PC-9 (cell line): ENCODE measurements at regions of chr17 and their contacts with region 1.

Region 1: DNA sequence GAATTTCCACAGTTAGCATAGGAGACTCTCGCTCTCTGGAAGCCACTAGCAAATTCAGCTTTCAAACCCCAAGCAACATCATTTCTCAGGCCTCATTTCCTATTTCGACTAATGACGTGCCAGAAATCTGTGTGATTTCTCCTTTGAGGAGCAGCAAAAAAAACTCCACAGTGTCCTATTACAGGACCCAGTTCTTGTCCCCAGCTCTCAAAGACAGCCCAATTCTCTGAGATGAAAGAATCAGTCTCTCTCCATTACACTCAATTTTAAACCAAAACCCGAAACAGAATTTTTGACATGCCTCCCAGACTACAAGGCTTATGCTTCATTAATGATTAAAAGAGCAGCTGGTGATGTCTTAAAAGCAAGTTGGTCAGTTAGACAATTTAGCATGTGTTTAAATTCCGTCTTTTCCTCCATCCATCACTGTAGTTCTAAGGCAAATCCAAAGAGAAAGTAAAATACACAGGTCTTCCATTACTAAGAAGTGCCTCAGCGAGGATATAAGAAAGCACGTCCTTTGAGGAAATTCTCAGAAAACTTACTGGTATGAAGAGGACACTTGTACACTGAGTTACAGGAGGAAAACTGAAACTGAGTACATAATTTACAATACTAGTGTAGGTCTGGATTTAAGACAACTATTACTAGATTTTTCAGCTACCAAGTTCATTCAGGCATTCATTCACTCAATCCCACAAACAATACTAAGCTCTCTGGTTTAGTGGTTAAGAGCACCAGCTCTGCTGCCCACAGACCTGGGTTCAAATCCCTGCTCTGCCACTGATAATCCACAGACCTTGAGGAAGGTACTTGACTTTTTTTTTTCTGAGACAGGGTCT is 12.5 kb downstream of the TOM1L2 start:
- DNase-seq: no peak
- H3K4me3 ChIP-seq: no peak overlapping the region
- H3K27ac ChIP-seq: peak overlapping the region; percentile 90
- H3K4me1 ChIP-seq: peaks cover 54% of the 10 kb centered on the region
- H3K27me3 ChIP-seq: no peaks in the 10 kb centered on the region
- CTCF ChIP-seq: no peak

Region 2: DNA sequence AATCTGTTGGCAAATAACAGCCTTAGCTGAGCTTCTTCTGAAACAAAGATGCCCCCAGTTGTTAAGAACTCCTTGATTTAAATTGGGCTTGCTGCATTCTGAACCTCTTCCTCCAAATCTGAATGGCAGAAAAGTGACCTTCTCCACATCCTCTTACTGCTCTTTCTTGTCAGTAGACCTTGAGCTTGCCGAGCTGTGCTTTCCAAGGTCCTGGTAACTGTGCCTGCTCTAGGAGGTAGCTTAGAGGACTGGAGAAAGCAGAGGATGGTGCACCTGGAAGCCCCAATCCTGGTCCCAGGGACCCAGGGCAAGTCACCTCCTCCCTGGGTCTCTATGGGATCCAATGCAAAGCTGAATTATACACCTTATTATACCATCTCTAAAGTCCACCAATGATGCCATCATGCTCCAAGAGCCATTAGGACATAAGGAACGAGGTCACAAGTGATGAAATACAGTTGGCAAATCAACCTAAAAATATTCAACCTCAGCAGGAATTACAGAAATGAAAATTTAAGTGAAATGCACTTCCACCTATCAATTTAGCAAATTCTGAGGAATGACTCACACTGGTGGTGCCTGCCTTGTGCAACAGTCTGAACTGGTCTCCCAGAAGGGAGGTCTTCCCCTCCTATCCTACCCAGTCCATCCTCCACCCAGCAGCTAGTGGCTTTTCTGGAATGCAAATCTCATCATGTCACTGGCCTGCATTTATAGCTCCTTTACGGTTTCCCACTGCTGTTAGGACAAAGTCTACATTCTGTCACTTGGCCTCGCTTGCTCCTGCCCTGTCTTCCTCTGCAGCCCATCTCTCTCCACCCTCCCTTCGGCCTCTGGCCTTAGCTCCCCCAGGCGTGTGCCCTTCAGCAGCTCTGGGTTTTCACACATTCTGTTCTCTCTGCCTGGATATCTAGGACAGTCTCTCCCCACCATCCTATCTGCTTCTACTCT is 24.1 kb before region 1 on chr17:
- CTCF ChIA-PET with region 1: no interaction called
- POLR2A ChIA-PET with region 1: interaction called, 10 read pairs
- intact Hi-C with region 1: no loop called
- DNase-seq: peak; percentile 64 to 93
- H3K4me3 ChIP-seq: 0 out of 2 replicates have a peak overlapping the region, but pooled peaks have one; percentile 11
- H3K27ac ChIP-seq: peak overlapping the region; percentile 65
- H3K4me1 ChIP-seq: peaks cover 37% of the 10 kb centered on the region
- H3K27me3 ChIP-seq: no peaks in the 10 kb centered on the region
- CTCF ChIP-seq: no peak

Region 3: GRCh38 chr17:17972126-17972951 is 12.6 kb after region 1 on chr17 and contains the starts of genes DRC3 and TOM1L2:
- CTCF ChIA-PET with region 1: no interaction called
- POLR2A ChIA-PET with region 1: interaction called, 21 read pairs
- intact Hi-C with region 1: loop called (anchors 2 kb)
- DNase-seq: peak; percentile 100
- H3K4me3 ChIP-seq: peak within 1 kb of the TSS; percentile 82
- H3K27ac ChIP-seq: peak within 1 kb of the TSS; percentile 40
- H3K4me1 ChIP-seq: peaks cover 28% of the 10 kb centered on the region
- H3K27me3 ChIP-seq: no peaks in the 10 kb centered on the region
- CTCF ChIP-seq: no peak
- total RNA-seq, gene DRC3: 7.2 and 15.2 TPM in 2 replicates
- total RNA-seq, gene TOM1L2: 68.5 and 71.8 TPM in 2 replicates

Region 4: DNA sequence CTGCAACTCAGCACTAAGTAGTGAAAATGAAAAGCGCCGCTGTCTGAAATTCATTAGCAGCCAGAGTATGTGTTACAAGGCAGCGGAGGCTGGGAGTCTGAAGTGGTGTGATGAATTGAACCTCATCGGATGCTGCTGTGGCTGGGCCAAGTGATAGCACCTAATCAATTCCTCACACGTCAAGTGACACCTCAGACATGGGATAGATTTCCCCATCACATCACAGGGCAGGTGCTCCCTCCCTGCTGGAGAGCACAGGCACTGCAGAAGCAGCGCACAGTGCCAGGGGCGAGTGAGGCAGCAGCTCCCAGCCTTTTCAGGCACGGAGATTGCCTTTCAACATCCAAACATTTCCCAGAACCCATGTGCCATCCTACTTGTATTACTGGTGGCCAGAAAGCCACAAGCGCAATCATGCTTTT is 45.2 kb after region 1 on chr17:
- CTCF ChIA-PET with region 1: no interaction called
- POLR2A ChIA-PET with region 1: no interaction called
- intact Hi-C with region 1: loop called (anchors 2 kb)
- DNase-seq: no peak
- H3K4me3 ChIP-seq: no peak overlapping the region
- H3K27ac ChIP-seq: peak overlapping the region; percentile 22; the same call in 1 of the 2 replicates
- H3K4me1 ChIP-seq: peaks cover 54% of the 10 kb centered on the region
- H3K27me3 ChIP-seq: no peaks in the 10 kb centered on the region
- CTCF ChIP-seq: peak; percentile 31

Region 5: GRCh38 chr17:18064053-18064452 is 104.3 kb after region 1 on chr17:
- CTCF ChIA-PET with region 1: no interaction called
- POLR2A ChIA-PET with region 1: interaction called, 15 read pairs
- intact Hi-C with region 1: no loop called
- DNase-seq: no peak
- H3K4me3 ChIP-seq: no peak overlapping the region
- H3K27ac ChIP-seq: no peak overlapping the region
- H3K4me1 ChIP-seq: peaks cover 7% of the 10 kb centered on the region
- H3K27me3 ChIP-seq: no peaks in the 10 kb centered on the region
- CTCF ChIP-seq: no peak